Right ventricle myocardium inferior (tissue), 1 donor: ENCODE measurements at regions of chr14 and their contacts with region 1.

Region 1: GRCh38 chr14:52131640-52132320 is 62.9 kb upstream of the NID2 start:
- DNase-seq: no peak
- ATAC-seq: peak; percentile 88

Region 2: GRCh38 chr14:51780006-51780692 is 351.6 kb before region 1 on chr14:
- intact Hi-C with region 1: loop called (anchors 10 kb)
- DNase-seq: peak; percentile 75
- ATAC-seq: peak; percentile 53

Region 3: GRCh38 chr14:51860164-51860824 is 271.5 kb before region 1 on chr14 and contains the start of gene GNG2:
- intact Hi-C with region 1: no loop called
- DNase-seq: peak; percentile 95
- ATAC-seq: peak; percentile 99
- total RNA-seq, gene GNG2: 15.5 TPM

Region 4: GRCh38 chr14:51996148-51996746 is 135.5 kb before region 1 on chr14:
- intact Hi-C with region 1: loop called (anchors 1 kb)
- DNase-seq: no peak
- ATAC-seq: no peak

Region 5: DNA sequence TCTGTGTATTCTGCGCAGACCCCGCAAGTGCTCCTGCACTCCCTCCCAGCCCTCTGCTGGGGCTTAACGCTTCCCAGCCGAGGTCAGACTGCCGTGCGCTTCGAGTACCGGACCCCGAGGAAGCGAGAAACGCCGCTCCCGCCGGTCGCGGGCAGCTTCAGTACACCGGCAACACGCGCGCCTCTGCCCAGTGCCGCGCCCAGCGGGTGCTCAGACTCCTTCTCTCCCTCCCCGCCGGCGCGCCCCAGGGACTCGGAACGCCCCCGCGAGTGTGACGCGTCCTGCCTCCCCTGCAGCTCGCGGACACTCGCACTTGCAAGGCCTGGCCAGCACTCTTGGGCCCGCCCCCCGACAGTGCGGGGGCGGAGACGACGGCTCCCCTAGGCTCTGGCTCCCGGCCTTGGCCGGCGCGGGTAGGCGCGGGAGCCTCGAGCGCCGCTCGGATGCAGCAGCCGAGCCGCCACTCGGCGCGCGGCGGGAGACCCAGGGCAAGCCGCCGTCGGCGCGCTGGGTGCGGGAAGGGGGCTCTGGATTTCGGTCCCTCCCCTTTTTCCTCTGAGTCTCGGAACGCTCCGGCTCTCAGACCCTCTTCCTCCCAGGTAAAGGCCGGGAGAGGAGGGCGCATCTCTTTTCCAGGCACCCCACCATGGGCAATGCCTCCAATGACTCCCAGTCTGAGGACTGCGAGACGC is 182.3 kb after region 1 on chr14 and contains the start of gene PTGER2:
- intact Hi-C with region 1: no loop called
- DNase-seq: peak; percentile 96
- ATAC-seq: peak; percentile 89
- total RNA-seq, gene PTGER2: 0.76 TPM